IMR-90 (cell line): ENCODE measurements at regions of chr7 and their contacts with region 1.

Region 1: DNA sequence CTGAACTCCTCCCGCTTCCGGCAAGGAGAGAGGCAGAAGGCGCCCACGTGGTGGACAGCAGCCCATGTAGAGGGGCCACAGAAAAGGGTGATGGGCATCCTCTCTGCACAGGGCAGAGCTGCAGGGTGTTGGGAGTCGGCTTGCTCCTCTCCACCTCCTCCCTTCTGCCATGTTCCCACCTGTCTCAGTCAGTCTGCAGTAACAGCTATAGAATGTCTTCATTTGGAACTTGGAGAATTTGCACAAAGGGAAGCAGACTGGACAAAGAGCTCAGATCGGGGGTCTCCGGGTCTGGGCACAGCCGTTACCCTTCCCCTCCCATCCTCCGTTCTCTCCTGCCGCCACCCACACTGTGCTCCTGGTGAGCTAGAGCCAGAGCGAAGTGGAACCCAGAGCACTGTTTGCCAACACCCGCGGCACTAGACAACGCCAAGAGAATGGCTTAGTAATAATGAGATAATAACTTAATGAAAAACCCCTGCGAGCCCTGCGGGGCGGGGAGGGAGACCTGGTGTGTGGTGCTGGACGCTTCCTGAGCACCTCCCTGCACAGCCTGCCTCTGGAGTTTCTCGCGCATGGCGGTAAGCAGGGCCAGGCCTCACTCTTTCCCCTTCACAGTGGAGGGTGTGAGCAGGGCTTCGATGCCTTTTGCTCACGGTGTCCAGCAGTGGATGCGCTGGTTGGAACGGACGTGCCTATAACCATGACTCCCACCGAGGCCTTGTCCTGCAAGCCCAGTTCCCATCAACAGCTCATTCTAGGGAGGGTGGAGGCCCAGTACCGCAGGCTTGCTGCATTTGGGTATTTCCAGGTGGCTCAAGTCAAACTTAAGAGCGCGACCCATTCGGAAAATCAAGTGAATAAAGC is 254.6 kb downstream of the PAXIP1 start:
- DNase-seq: no peak
- ATAC-seq: no peak
- H3K4me3 ChIP-seq: no peak overlapping the region
- H3K27ac ChIP-seq: no peak overlapping the region
- H3K4me1 ChIP-seq: no peaks in the 10 kb centered on the region
- H3K27me3 ChIP-seq: no peaks in the 10 kb centered on the region
- CTCF ChIP-seq: no peak
- POLR2A ChIP-seq: no peak
- RAD21 ChIP-seq: no peak

Region 2: DNA sequence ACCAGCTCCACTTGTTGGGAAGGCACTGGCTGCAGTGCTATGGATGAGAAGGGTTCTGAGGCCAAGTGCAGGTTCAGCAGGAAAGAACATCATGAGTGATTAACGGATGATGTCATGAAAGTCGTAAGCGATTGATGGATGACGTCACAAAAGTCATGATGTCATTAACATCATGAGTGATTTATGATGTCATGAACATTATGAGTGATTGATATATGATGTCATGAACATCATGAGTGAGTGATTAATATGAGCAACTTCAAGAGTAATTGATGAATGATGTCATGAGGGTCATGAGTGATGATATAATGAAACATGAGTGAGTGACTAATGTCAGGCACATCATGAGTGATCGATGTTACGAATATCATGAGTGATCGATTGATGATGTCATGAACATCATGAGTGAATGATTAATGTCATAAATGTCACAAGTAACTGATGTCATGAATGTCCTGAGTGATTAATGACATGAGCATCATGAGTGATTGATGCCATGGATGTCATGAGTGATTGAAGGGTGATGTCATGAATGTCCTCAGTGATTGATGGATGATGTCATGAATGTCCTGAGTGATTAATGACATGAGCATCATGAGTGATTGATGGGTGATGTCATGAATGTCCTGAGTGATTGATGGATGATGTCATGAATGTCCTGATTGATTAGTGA is 69.0 kb after region 1 on chr7:
- CTCF ChIA-PET with region 1: no interaction called
- POLR2A ChIA-PET with region 1: no interaction called
- dilution Hi-C with region 1: no loop called
- in situ Hi-C with region 1: no loop called
- intact Hi-C with region 1: loop called (anchors 2 kb)
- DNase-seq: no peak
- ATAC-seq: no peak
- H3K4me3 ChIP-seq: no peak overlapping the region
- H3K27ac ChIP-seq: no peak overlapping the region
- H3K4me1 ChIP-seq: no peaks in the 10 kb centered on the region
- H3K27me3 ChIP-seq: no peaks in the 10 kb centered on the region
- CTCF ChIP-seq: no peak
- POLR2A ChIP-seq: no peak
- RAD21 ChIP-seq: no peak